Panc1 (cell line): ENCODE measurements at regions of chr11 and their contacts with region 1.

Region 1: DNA sequence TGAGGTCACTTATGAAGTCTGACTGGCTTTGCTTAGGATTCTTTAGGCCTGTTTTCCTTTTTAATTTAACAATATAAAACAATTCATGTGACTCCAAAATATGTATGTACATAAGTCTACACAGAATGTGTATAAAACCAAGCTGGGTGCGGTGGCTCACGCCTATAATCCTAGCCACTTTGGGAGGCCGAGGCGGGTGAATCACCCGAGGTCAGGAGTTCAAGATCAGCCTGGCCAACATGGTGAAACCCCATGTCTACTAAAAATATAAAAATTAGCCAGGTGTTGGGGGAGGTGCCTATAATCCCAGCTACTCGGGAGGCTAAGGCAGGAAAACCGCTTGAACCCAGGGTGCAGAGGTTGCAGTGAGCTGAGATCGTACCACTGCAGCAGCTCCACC is 83.0 kb downstream of the SHANK2 start:
- DNase-seq: no peak
- ATAC-seq: no peak
- H3K4me3 ChIP-seq: no peak overlapping the region
- H3K27ac ChIP-seq: no peak overlapping the region
- H3K4me1 ChIP-seq: no peaks in the 10 kb centered on the region
- H3K27me3 ChIP-seq: no peaks in the 10 kb centered on the region
- CTCF ChIP-seq: no peak

Region 2: GRCh38 chr11:70901951-70902521 is 267.3 kb before region 1 on chr11:
- CTCF ChIA-PET with region 1: no interaction called
- POLR2A ChIA-PET with region 1: no interaction called
- in situ Hi-C with region 1: no loop called
- intact Hi-C with region 1: no loop called
- DNase-seq: no peak
- ATAC-seq: peak; percentile 49; the same call in 1 of the 2 replicates
- H3K4me3 ChIP-seq: no peak overlapping the region
- H3K27ac ChIP-seq: no peak overlapping the region
- H3K4me1 ChIP-seq: no peaks in the 10 kb centered on the region
- H3K27me3 ChIP-seq: no peaks in the 10 kb centered on the region
- CTCF ChIP-seq: no peak

Region 3: DNA sequence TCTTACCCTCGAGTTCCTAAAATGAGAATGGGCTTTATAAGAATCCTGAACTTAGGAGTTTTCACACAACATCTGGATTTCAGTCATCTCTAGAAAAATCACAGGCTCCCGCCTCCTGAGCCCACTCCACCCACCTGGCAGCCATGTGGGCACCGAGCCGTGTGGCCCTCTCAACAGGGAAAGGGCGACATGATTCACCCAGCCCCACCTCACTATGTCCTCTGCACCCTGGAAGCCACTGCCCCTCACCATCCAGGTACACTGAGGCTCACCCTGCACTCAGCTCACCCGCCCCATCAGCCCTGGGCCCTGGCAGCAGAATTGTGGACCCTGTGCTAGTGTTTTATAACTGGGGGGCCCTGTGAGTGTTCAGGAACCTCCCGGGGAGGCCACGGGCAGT is 18.5 kb before region 1 on chr11:
- CTCF ChIA-PET with region 1: interaction called, 16 read pairs
- POLR2A ChIA-PET with region 1: no interaction called
- in situ Hi-C with region 1: no loop called
- intact Hi-C with region 1: no loop called
- DNase-seq: no peak
- ATAC-seq: no peak
- H3K4me3 ChIP-seq: no peak overlapping the region
- H3K27ac ChIP-seq: no peak overlapping the region
- H3K4me1 ChIP-seq: no peaks in the 10 kb centered on the region
- H3K27me3 ChIP-seq: no peaks in the 10 kb centered on the region
- CTCF ChIP-seq: no peak

Region 4: GRCh38 chr11:71206186-71206585 is 36.9 kb after region 1 on chr11:
- CTCF ChIA-PET with region 1: no interaction called
- POLR2A ChIA-PET with region 1: no interaction called
- in situ Hi-C with region 1: no loop called
- intact Hi-C with region 1: no loop called
- DNase-seq: no peak
- ATAC-seq: no peak
- H3K4me3 ChIP-seq: no peak overlapping the region
- H3K27ac ChIP-seq: no peak overlapping the region
- H3K4me1 ChIP-seq: no peaks in the 10 kb centered on the region
- H3K27me3 ChIP-seq: no peaks in the 10 kb centered on the region; the same call in 1 of the 2 replicates
- CTCF ChIP-seq: no peak